ENCODE measurements at regions of chr16 and their contacts with region 1.

Region 1: DNA sequence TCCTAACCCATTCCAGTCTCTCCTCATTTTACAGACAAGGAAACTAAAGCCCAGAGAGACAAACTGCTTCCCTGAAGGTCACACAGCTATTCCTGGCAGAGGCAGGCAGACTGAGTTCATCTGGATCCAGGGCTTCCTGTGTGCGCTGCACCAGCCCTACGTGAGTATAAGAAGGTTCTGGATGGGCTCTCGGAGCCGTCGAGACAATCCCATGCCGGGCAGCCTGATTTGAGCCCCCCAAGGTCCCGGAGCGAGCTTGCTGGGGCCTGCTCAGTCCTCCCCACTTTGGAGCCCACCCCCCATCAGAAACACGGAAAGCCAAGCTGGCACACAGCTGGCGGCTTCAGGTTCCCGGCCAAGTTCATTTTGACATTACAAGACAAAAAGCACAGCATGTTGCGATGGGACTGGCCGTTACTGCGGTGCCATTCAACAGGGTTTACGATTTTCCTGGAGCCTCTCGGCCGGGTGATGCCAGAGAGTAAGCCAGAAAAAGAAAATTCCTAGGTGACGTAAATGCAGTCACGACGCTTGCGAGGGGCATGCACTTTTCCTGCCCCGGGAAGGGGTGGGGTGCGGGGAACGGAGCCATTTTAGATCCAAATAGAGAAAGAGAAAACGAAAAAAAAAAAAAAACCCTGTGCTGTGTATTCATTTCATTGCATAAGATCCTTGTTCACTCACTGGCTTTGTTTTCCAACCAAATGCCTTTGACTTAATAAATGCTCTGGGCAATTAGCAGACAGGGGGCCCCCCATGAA is 167.1 kb upstream of the FOXF1 start:
- DNase-seq: peak; percentile 35
- H3K4me3 Mint-ChIP-seq: peak overlapping the region; percentile 61
- H3K27ac Mint-ChIP-seq: no peak overlapping the region
- H3K4me1 Mint-ChIP-seq: peaks cover 17% of the 10 kb centered on the region
- H3K27me3 Mint-ChIP-seq: peaks cover 20% of the 10 kb centered on the region
- CTCF ChIP-seq: no peak

Region 2: GRCh38 chr16:86403541-86404163 is 60.4 kb after region 1 on chr16:
- CTCF ChIA-PET with region 1: no interaction called
- POLR2A ChIA-PET with region 1: no interaction called
- intact Hi-C with region 1: loop called (anchors 1 kb)
- DNase-seq: peak; percentile 31
- H3K4me3 Mint-ChIP-seq: no peak overlapping the region
- H3K27ac Mint-ChIP-seq: no peak overlapping the region
- H3K4me1 Mint-ChIP-seq: no peaks in the 10 kb centered on the region
- H3K27me3 Mint-ChIP-seq: peaks cover 42% of the 10 kb centered on the region
- CTCF ChIP-seq: peak; percentile 8